ENCODE measurements at regions of chr1 and their contacts with region 1.

Region 1: DNA sequence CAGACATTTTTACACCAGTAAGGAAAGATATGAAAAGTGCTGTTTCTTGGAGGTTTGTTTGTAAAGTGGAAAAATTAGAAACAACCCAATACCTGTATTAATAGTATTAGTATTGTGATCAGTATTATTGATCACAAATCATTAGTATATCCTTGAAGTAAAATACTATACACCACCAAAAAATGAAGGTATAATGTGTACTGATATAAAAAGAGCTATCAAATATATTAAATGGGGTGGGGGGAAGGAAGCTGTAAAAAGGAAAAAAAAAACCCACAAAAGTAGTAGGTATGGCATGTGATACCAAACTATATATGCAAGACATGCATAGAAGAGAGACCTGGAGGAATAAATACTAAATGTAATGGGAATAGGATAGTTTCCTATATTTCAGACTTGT is 46.3 kb downstream of the POU2F1 start:
- DNase-seq: no peak
- H3K4me3 ChIP-seq: no peak overlapping the region
- H3K27ac ChIP-seq: no peak overlapping the region
- H3K4me1 ChIP-seq: peaks cover 0 to 22% of the 10 kb centered on the region in 2 donors
- H3K27me3 ChIP-seq: no peaks in the 10 kb centered on the region
- CTCF ChIP-seq: no peak

Region 2: DNA sequence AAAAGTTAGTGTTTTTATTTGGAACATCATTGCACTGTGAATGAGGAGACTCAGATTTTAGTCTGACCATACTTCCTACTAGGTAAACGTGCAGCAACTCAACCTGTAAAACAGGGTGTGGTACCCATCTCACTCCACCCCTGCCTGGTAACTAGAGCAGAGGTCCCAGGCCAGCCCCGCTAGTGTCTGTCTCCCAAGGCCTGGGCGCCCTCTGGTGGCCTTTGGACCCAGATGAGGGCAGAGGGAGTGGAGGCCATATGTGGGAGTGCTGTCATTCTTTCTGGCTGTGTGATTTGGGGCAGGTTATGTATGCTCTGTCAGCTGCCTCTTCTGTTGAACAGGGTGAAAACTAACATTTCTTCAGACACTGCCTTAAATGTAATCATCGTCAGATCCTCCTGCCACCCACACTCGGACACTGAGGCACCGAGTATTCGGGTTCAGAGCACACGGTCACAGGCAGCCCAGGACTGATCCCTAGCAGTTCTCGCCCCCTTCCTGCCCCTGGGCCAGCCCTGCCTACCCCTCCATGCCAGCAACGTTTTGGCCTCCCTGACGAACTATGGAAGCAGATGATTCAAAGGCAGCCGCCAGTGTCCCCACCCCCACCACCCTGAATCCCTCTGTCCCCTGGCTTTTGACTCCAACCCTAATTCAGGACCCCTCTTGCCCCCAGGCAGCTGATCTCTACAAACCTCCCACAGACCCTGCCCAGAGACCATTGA is 175.3 kb after region 1 on chr1:
- intact Hi-C with region 1: loop called (anchors 2 kb)
- DNase-seq: peak in 1 of 2 donors; percentile 87
- H3K4me3 ChIP-seq: no peak overlapping the region
- H3K27ac ChIP-seq: no peak overlapping the region
- H3K4me1 ChIP-seq: peaks cover 4 to 6% of the 10 kb centered on the region in 2 donors
- H3K27me3 ChIP-seq: no peaks in the 10 kb centered on the region
- CTCF ChIP-seq: peak; percentile 59 to 88 (median 79)

Measured in ascending aorta (tissue), 2 donors.